Right cardiac atrium (tissue), 5 donors: ENCODE measurements at regions of chr11 and their contacts with region 1.

Region 1: DNA sequence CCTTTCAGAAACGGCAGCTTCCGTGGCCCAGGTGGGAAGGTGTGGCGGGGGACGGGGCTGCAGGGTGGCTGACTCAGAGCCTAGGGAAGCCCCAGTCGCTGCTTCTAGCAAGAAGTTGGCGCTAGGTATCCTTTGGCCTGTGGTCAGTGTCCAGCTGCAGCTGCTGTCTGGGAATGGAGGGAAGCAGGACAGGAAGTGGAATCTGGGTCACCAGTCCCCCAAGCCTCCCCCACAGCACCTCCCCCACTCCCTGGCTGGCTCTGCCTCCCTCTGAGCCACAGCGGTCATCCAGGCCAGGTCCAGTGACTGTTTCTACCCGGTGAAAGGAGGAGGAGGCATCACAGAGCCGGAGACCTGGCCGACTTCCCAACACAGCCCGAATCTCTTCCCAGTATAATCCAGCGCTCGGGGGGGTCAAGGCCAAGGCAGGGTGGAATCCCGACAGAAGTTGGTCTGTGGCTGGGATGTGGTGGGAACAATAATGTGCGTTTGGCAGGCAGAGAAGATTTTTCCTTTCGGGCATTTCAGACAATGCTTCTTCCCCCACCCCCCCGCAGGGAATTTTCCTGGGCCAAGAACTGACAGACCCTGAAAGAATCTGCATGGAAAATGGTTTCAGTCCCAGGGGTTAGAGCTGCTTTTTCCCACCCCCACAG is 45.1 kb downstream of the C11orf96 start:
- DNase-seq: peak; percentile 96 to 97 (median 97)
- ATAC-seq: peak; percentile 89 to 92
- H3K4me3 ChIP-seq: no peak overlapping the region
- H3K27ac ChIP-seq: peak overlapping the region; percentile 65
- H3K4me1 ChIP-seq: peaks cover 9% of the 10 kb centered on the region
- H3K27me3 ChIP-seq: no peaks in the 10 kb centered on the region

Region 2: GRCh38 chr11:44029977-44030911 is 42.7 kb after region 1 on chr11:
- intact Hi-C with region 1: loop called in 1 of 4 experiments (anchors 5 kb)
- DNase-seq: peak in 2 of 3 donors; percentile 52 to 72
- ATAC-seq: peak; percentile 83 to 89
- H3K4me3 ChIP-seq: no peak overlapping the region
- H3K27ac ChIP-seq: peak overlapping the region; percentile 75
- H3K4me1 ChIP-seq: peaks cover 12% of the 10 kb centered on the region
- H3K27me3 ChIP-seq: no peaks in the 10 kb centered on the region